PC-3 (cell line): ENCODE measurements at regions of chr13 and their contacts with region 1.

Region 1: DNA sequence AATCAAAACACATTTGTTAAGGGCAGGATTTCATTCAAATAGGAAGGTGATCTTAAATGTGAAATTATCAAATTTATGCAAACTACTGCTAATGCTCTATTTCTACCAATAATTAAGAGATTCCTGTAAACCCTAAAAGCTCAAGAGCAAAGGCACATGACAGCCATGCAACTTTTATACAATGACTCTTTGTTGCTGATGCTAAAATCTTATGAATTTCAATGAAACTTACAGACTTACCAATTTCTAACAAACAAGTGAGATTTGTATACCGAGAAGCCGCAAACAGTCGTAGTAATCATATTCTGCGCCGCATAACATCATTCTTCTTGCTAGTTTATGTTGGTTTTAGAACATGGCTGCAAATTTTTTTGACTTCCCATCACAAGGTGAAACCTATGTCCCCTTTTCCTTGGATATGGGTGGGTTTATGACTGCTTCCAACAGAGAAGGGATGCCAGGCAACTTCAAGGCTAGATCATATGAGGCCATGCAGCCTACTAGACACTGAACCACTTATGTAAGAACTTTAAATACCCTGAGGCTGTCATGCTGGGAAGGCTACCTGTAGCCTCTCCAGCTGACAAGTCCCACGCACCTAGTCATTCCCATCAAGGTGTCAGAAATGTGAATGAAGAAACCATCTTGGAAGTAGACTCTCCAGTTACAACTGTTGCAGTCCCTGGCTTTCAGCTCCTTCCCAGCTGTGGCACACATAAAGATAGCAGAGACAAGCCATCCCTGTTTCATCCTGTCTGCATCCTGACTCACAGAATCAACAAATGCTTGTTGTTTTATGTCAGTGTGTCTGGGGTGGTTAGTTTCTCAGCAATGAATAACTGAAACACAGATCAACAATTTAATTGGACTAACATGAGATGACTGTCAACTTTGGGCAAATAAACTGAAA is 42.0 kb downstream of the LNX2 start:
- DNase-seq: peak; percentile 78
- ATAC-seq: peak; percentile 98
- H3K4me3 ChIP-seq: no peak overlapping the region
- H3K27ac ChIP-seq: peak overlapping the region; percentile 43
- H3K4me1 ChIP-seq: peaks cover 41% of the 10 kb centered on the region
- H3K27me3 ChIP-seq: no peaks in the 10 kb centered on the region
- CTCF ChIP-seq: no peak

Region 2: GRCh38 chr13:27658546-27658945 is 80.2 kb after region 1 on chr13:
- CTCF ChIA-PET with region 1: no interaction called
- POLR2A ChIA-PET with region 1: no interaction called
- intact Hi-C with region 1: loop called (anchors 5 kb)
- DNase-seq: peak; percentile 57
- ATAC-seq: peak; percentile 77
- H3K4me3 ChIP-seq: no peak overlapping the region
- H3K27ac ChIP-seq: peak overlapping the region; percentile 28; the same call in 1 of the 2 replicates
- H3K4me1 ChIP-seq: peaks cover 30% of the 10 kb centered on the region
- H3K27me3 ChIP-seq: no peaks in the 10 kb centered on the region
- CTCF ChIP-seq: no peak